Endothelial cell of umbilical vein (primary cell): ENCODE measurements at regions of chr13 and their contacts with region 1.

Region 1: GRCh38 chr13:32019612-32020233 is 11.9 kb upstream of the FRY start:
- DNase-seq: peak; percentile 84
- H3K4me3 ChIP-seq: no peak overlapping the region
- H3K27ac ChIP-seq: no peak overlapping the region
- H3K4me1 ChIP-seq: no peaks in the 10 kb centered on the region
- H3K27me3 ChIP-seq: peaks cover 0 to 10% of the 10 kb centered on the region in 2 experiments
- CTCF ChIP-seq: peak; percentile 75 to 79
- POLR2A ChIP-seq: no peak

Region 2: DNA sequence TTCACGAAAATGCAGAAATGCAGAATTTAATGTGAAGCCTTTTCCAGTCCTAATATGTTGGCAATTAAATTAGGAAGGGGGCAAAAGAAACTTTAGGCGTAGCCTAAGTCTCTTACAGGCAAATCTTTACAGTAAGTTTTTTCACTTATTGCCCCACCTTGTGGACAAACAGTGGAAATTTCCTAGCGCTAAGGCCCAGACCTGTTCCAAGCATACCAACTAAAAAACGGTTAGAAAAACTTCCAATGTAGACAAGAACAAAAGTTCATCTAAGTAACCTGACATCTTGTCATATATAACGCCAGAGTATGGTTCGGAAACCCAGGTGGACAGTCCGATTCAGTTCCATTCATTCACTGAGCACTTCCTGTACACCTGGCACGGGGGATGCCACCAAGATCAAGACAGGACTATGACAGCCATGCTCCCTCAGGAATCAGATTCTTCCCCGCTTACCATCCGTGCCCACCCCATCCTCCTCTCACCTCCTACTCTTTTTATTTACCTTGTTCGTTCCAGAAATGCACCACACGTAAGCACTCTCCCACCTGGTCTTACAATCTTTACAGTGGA is 290.5 kb after region 1 on chr13:
- CTCF ChIA-PET with region 1: interaction called, 3 read pairs
- POLR2A ChIA-PET with region 1: no interaction called
- dilution Hi-C with region 1: no loop called
- intact Hi-C with region 1: loop called (anchors 1 kb)
- DNase-seq: peak; percentile 72
- H3K4me3 ChIP-seq: no peak overlapping the region
- H3K27ac ChIP-seq: no peak overlapping the region
- H3K4me1 ChIP-seq: peaks cover 14% of the 10 kb centered on the region
- H3K27me3 ChIP-seq: no peaks in the 10 kb centered on the region
- CTCF ChIP-seq: peak; percentile 56 to 60
- POLR2A ChIP-seq: no peak

Region 3: GRCh38 chr13:32443111-32443510 is 423.4 kb after region 1 on chr13:
- CTCF ChIA-PET with region 1: no interaction called
- POLR2A ChIA-PET with region 1: no interaction called
- dilution Hi-C with region 1: no loop called
- intact Hi-C with region 1: loop called (anchors 1 kb)
- DNase-seq: peak; percentile 43
- H3K4me3 ChIP-seq: no peak overlapping the region
- H3K27ac ChIP-seq: no peak overlapping the region
- H3K4me1 ChIP-seq: no peaks in the 10 kb centered on the region
- H3K27me3 ChIP-seq: no peaks in the 10 kb centered on the region
- CTCF ChIP-seq: peak in 1 of 2 donors; percentile 43
- POLR2A ChIP-seq: no peak